ENCODE measurements at regions of chr2 and their contacts with region 1.

Region 1: GRCh38 chr2:61888267-61889055 is at the start of gene CCT4:
- DNase-seq: peak; percentile 83 to 96 (median 88)
- ATAC-seq: peak; percentile 79
- H3K4me3 ChIP-seq: peak within 1 kb of the TSS; percentile 79
- H3K4me3 Mint-ChIP-seq: peak within 1 kb of the TSS; percentile 100
- H3K27ac ChIP-seq: peak within 1 kb of the TSS; percentile 90 to 98
- H3K27ac Mint-ChIP-seq: peak within 1 kb of the TSS; percentile 100
- H3K4me1 ChIP-seq: peaks cover 19% of the 10 kb centered on the region
- H3K4me1 Mint-ChIP-seq: peaks cover 38% of the 10 kb centered on the region
- H3K27me3 ChIP-seq: no peaks in the 10 kb centered on the region
- H3K27me3 Mint-ChIP-seq: no peaks in the 10 kb centered on the region
- CTCF ChIP-seq: no peak
- total RNA-seq, gene CCT4: 100 to 114 TPM

Region 2: GRCh38 chr2:61065715-61066709 is 822.4 kb before region 1 on chr2 and contains the start of gene SANBR:
- CTCF ChIA-PET with region 1: no interaction called
- POLR2A ChIA-PET with region 1: no interaction called
- intact Hi-C with region 1: loop called in 1 of 2 experiments (anchors 5 kb)
- DNase-seq: peak; percentile 59 to 93 (median 78)
- ATAC-seq: peak; percentile 97
- H3K4me3 ChIP-seq: peak within 1 kb of the TSS; percentile 63
- H3K4me3 Mint-ChIP-seq: peak within 1 kb of the TSS; percentile 99
- H3K27ac ChIP-seq: peak within 1 kb of the TSS in 1 of 2 donors; percentile 30
- H3K27ac Mint-ChIP-seq: peak within 1 kb of the TSS; percentile 68
- H3K4me1 ChIP-seq: peaks cover 11% of the 10 kb centered on the region
- H3K4me1 Mint-ChIP-seq: peaks cover 7% of the 10 kb centered on the region
- H3K27me3 ChIP-seq: no peaks in the 10 kb centered on the region
- H3K27me3 Mint-ChIP-seq: no peaks in the 10 kb centered on the region
- CTCF ChIP-seq: no peak
- total RNA-seq, gene SANBR: 1.1 to 1.3 TPM

Region 3: GRCh38 chr2:61694312-61695274 is 193.9 kb before region 1 on chr2:
- CTCF ChIA-PET with region 1: no interaction called
- POLR2A ChIA-PET with region 1: no interaction called
- intact Hi-C with region 1: loop called in 1 of 2 experiments (anchors 10 kb)
- DNase-seq: peak; percentile 65 to 90 (median 80)
- ATAC-seq: peak; percentile 95
- H3K4me3 ChIP-seq: peak overlapping the region; percentile 83
- H3K4me3 Mint-ChIP-seq: peak overlapping the region; percentile 89
- H3K27ac ChIP-seq: peak overlapping the region; percentile 29 to 59
- H3K27ac Mint-ChIP-seq: peak overlapping the region; percentile 85
- H3K4me1 ChIP-seq: peaks cover 11% of the 10 kb centered on the region
- H3K4me1 Mint-ChIP-seq: peaks cover 9% of the 10 kb centered on the region
- H3K27me3 ChIP-seq: no peaks in the 10 kb centered on the region
- H3K27me3 Mint-ChIP-seq: no peaks in the 10 kb centered on the region
- CTCF ChIP-seq: peak; percentile 31

Region 4: DNA sequence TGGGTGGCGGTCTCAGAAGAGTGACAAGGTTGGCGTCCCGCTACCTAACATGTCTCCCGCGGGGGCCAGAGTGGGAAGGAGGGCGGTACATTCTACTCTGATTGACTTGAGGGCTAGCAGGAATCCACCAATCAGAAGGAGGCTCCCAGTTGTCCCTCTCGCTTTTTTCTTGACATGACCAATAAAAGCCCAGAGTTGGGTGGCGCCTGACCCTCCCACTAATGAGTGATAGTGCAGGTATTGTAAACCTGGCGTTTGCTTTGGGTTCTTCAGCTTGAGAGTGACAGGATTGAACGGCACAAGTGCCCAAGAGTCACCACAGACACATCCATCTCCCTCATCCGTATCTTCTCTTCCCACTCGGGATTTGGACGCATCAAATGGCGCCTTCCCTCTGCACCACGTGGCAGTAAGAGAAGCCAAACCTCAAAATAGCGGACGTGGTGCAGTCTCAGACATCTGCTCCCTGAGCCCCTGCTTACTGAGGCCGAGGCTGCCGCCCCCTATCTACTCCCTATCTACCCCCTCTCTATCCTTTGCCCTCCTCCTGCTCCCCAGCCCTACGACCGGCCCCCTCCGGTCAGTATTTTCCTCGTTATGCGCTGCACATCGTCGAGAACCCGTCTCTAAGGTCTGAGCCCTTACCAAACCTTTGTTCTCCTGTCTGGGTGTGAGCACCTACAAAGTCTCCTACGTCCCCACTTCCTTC is 33.8 kb before region 1 on chr2:
- CTCF ChIA-PET with region 1: interaction called, 3 read pairs
- POLR2A ChIA-PET with region 1: interaction called, 3 read pairs
- intact Hi-C with region 1: loop called (anchors 1 to 2 kb)
- DNase-seq: peak; percentile 75 to 97 (median 83)
- ATAC-seq: peak; percentile 91
- H3K4me3 ChIP-seq: peak overlapping the region; percentile 98
- H3K4me3 Mint-ChIP-seq: peak overlapping the region; percentile 97
- H3K27ac ChIP-seq: peak overlapping the region; percentile 65 to 79
- H3K27ac Mint-ChIP-seq: peak overlapping the region; percentile 94
- H3K4me1 ChIP-seq: peaks cover 14% of the 10 kb centered on the region
- H3K4me1 Mint-ChIP-seq: peaks cover 16% of the 10 kb centered on the region
- H3K27me3 ChIP-seq: no peaks in the 10 kb centered on the region
- H3K27me3 Mint-ChIP-seq: no peaks in the 10 kb centered on the region
- CTCF ChIP-seq: no peak

Region 5: DNA sequence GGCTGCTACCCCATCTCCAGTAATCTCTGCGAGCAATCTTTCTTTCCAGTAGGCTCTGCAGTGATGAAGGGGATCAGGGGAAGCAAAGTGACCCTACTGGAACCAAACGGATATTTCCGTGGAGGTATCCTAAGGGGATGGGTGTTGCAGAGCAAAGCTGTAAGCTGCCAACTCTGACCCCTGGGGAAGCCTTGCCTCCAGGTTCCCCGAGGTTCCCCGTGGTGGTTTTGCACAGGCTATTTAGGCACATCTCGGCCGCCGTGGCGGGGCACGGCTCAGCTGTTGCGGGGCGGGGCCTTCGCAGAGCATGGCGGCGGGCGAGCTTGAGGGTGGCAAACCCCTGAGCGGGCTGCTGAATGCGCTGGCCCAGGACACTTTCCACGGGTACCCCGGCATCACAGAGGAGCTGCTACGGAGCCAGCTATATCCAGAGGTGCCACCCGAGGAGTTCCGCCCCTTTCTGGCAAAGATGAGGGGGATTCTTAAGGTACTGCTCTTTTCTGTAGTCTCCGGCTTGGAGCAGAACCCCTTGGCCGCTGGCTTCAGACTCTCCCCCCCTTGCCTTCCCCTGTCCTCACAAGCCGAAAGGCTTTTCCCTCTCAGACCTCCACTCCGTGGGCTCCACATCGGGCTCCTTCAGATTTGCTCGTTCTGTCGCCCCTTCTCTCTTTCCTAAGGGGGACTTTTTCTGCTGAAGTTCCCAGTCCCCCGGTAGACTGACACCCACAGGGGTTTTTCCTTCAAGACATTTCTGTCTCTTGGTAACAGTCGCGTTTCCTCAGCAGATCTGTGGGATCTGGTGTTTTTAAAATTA is 17.1 kb after region 1 on chr2 and contains the start of gene COMMD1:
- CTCF ChIA-PET with region 1: interaction called, 3 read pairs
- POLR2A ChIA-PET with region 1: interaction called, 3 read pairs
- intact Hi-C with region 1: loop called in 1 of 2 experiments (anchors 2 kb)
- DNase-seq: peak; percentile 60 to 89 (median 74)
- ATAC-seq: peak; percentile 97
- H3K4me3 ChIP-seq: peak within 1 kb of the TSS; percentile 92
- H3K4me3 Mint-ChIP-seq: peak within 1 kb of the TSS; percentile 96
- H3K27ac ChIP-seq: peak within 1 kb of the TSS; percentile 23 to 38
- H3K27ac Mint-ChIP-seq: peak within 1 kb of the TSS; percentile 88
- H3K4me1 ChIP-seq: peaks cover 10% of the 10 kb centered on the region
- H3K4me1 Mint-ChIP-seq: peaks cover 22% of the 10 kb centered on the region
- H3K27me3 ChIP-seq: no peaks in the 10 kb centered on the region
- H3K27me3 Mint-ChIP-seq: no peaks in the 10 kb centered on the region
- CTCF ChIP-seq: no peak
- total RNA-seq, gene COMMD1: 11.5 to 13.2 TPM

Region 6: GRCh38 chr2:62010632-62011276 is 122.3 kb after region 1 on chr2:
- CTCF ChIA-PET with region 1: no interaction called
- POLR2A ChIA-PET with region 1: no interaction called
- intact Hi-C with region 1: no loop called
- DNase-seq: no peak
- ATAC-seq: no peak
- H3K4me3 ChIP-seq: no peak overlapping the region
- H3K4me3 Mint-ChIP-seq: no peak overlapping the region
- H3K27ac ChIP-seq: no peak overlapping the region
- H3K27ac Mint-ChIP-seq: no peak overlapping the region
- H3K4me1 ChIP-seq: no peaks in the 10 kb centered on the region
- H3K4me1 Mint-ChIP-seq: no peaks in the 10 kb centered on the region
- H3K27me3 ChIP-seq: no peaks in the 10 kb centered on the region
- H3K27me3 Mint-ChIP-seq: no peaks in the 10 kb centered on the region
- CTCF ChIP-seq: no peak